SK-N-SH (cell line): ENCODE measurements at regions of chr19 and their contacts with region 1.

Region 1: GRCh38 chr19:12660980-12661379 is 5.6 kb downstream of the MAN2B1 start:
- DNase-seq: no peak
- H3K4me3 ChIP-seq: no peak overlapping the region
- H3K27ac ChIP-seq: no peak overlapping the region
- H3K4me1 ChIP-seq: peaks cover 0 to 5% of the 10 kb centered on the region in 2 experiments; a peak in 1 of 4 replicates
- H3K27me3 ChIP-seq: no peaks in the 10 kb centered on the region
- CTCF ChIP-seq: no peak
- EP300 ChIP-seq: no peak
- RAD21 ChIP-seq: no peak

Region 2: DNA sequence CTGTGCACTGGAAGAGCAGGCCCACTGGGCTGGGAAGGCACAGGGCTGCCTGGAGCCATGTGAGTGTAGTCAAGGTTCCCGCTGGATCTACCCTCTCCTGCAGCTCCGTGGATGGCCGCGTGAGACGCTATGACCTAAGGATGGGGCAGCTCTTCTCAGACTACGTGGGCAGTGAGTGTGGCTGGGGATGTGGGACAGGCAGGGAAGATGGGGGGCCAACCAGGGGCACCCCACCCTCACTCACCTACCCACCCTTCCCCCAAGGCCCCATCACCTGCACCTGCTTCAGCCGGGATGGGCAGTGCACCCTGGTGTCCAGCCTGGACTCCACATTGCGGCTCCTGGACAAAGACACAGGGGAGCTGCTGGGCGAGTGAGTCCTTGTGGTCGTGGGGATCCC is 11.8 kb after region 1 on chr19:
- CTCF ChIA-PET with region 1: interaction called, 18 read pairs
- POLR2A ChIA-PET with region 1: interaction called, 6 read pairs
- DNase-seq: no peak
- H3K4me3 ChIP-seq: no peak overlapping the region
- H3K27ac ChIP-seq: no peak overlapping the region
- H3K4me1 ChIP-seq: peaks cover 5 to 18% of the 10 kb centered on the region in 2 experiments; a peak in 2 of 4 replicates
- H3K27me3 ChIP-seq: no peaks in the 10 kb centered on the region
- CTCF ChIP-seq: no peak
- EP300 ChIP-seq: no peak
- RAD21 ChIP-seq: no peak

Region 3: GRCh38 chr19:12965017-12965811 is 304.2 kb after region 1 on chr19:
- CTCF ChIA-PET with region 1: no interaction called
- POLR2A ChIA-PET with region 1: no interaction called
- DNase-seq: peak; percentile 89
- H3K4me3 ChIP-seq: peak overlapping the region; percentile 48 to 63
- H3K27ac ChIP-seq: peak overlapping the region; percentile 59 to 75
- H3K4me1 ChIP-seq: peaks cover 6 to 14% of the 10 kb centered on the region in 2 experiments; a peak in 3 of 4 replicates
- H3K27me3 ChIP-seq: no peaks in the 10 kb centered on the region
- CTCF ChIP-seq: peak; percentile 78
- EP300 ChIP-seq: no peak
- RAD21 ChIP-seq: peak; percentile 79